CD8-positive, alpha-beta T cell (primary cell): ENCODE measurements at regions of chr1 and their contacts with region 1.

Region 1: DNA sequence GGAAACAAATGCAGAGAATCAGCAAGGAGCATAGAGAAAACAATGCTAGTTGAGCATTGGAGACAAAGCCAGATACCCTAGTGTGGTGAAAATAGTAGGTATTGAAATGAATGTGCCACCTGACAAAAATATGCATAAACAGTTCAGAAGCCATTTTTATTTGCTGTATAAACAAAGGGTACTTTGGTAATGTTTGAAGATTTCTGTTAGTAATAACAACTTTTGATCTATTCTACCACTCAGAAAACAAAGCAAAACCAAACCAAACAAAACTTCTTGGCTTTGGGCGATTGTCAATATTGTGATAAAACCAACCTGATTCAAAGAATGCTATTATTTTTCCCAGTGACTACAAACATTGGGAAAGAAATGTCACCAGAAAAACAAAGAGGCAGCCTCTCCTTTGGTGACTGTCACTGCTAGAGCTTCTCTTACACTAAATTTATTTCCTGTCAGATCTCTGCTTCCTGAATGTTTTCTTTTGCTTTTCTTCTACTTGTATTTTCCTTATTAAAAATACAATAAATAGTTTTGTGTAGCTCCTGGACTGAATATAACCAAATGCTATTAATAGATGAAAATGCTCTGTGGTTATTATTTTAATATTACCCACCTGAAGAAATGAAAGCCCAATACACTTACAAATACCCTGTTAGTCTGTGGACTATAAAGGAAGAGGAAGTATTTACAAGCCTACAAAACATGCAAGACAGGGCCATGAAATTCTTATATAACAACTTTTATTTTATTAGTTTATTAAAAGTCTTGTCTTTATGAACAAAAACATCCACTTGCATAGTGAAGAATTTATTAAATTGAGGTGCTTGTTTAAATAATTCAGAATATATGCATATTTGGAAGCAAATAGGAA is 5.7 kb downstream of the ATP6V1G3 start:
- DNase-seq: peak in 1 of 9 experiments; percentile 34
- ATAC-seq: peak; percentile 48
- H3K4me3 ChIP-seq: peak overlapping the region in 1 of 2 experiments; percentile 6
- H3K4me3 Mint-ChIP-seq: peak overlapping the region; percentile 67
- H3K27ac ChIP-seq: peak overlapping the region; percentile 43 to 68
- H3K27ac Mint-ChIP-seq: peak overlapping the region; percentile 93
- H3K4me1 ChIP-seq: peaks cover 67% of the 10 kb centered on the region
- H3K4me1 Mint-ChIP-seq: peaks cover 78% of the 10 kb centered on the region
- H3K27me3 ChIP-seq: no peaks in the 10 kb centered on the region
- H3K27me3 Mint-ChIP-seq: no peaks in the 10 kb centered on the region
- CTCF ChIP-seq: no peak

Region 2: GRCh38 chr1:198212637-198213036 is 322.1 kb before region 1 on chr1:
- CTCF ChIA-PET with region 1: no interaction called
- POLR2A ChIA-PET with region 1: no interaction called
- intact Hi-C with region 1: no loop called
- DNase-seq: no peak
- ATAC-seq: no peak
- H3K4me3 ChIP-seq: no peak overlapping the region
- H3K4me3 Mint-ChIP-seq: no peak overlapping the region
- H3K27ac ChIP-seq: no peak overlapping the region
- H3K27ac Mint-ChIP-seq: no peak overlapping the region
- H3K4me1 ChIP-seq: no peaks in the 10 kb centered on the region
- H3K4me1 Mint-ChIP-seq: peaks cover 35% of the 10 kb centered on the region
- H3K27me3 ChIP-seq: no peaks in the 10 kb centered on the region
- H3K27me3 Mint-ChIP-seq: no peaks in the 10 kb centered on the region
- CTCF ChIP-seq: no peak

Region 3: DNA sequence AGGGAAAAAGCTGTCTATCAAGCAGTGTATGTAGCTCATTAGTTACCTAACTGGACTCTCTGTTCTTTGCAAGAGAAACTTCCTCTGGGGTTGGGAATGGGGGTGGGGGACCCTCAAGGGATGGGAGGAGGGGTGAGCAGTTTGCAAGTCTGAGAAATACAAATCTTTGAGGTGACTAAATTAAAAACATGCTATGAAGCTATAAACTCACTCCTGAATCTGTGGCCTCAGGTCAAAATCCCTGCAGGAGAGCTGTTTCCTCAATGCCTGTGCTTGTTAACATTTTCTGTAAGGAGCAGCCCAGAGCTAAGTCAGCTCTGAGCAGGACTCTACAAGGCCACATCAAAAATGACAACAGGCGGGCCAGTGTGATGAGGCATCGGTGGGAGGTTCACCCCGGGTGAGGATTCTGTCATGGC is 71.2 kb after region 1 on chr1:
- CTCF ChIA-PET with region 1: interaction called, 5 read pairs
- POLR2A ChIA-PET with region 1: interaction called, 4 read pairs
- intact Hi-C with region 1: loop called in 1 of 2 experiments (anchors 2 kb)
- DNase-seq: no peak
- ATAC-seq: no peak
- H3K4me3 ChIP-seq: no peak overlapping the region
- H3K4me3 Mint-ChIP-seq: no peak overlapping the region
- H3K27ac ChIP-seq: no peak overlapping the region
- H3K27ac Mint-ChIP-seq: no peak overlapping the region
- H3K4me1 ChIP-seq: peaks cover 64% of the 10 kb centered on the region
- H3K4me1 Mint-ChIP-seq: peaks cover 68% of the 10 kb centered on the region
- H3K27me3 ChIP-seq: no peaks in the 10 kb centered on the region
- H3K27me3 Mint-ChIP-seq: no peaks in the 10 kb centered on the region
- CTCF ChIP-seq: no peak